ENCODE measurements at regions of chr12 and their contacts with region 1.

Region 1: GRCh38 chr12:108803428-108804105 is 53.8 kb downstream of the SSH1 start:
- DNase-seq: peak in 1 of 2 experiments; percentile 76
- H3K4me3 ChIP-seq: peak overlapping the region in 1 of 4 experiments; percentile 43; a peak in 1 of 8 replicates
- H3K27ac ChIP-seq: no peak overlapping the region
- H3K4me1 ChIP-seq: peaks cover 2 to 13% (median 8%) of the 10 kb centered on the region in 4 experiments; a peak in 5 of 7 replicates
- H3K27me3 ChIP-seq: no peaks in the 10 kb centered on the region
- CTCF ChIP-seq: peak; percentile 75 to 95 (median 80)
- EP300 ChIP-seq: no peak
- POLR2A ChIP-seq: no peak
- RAD21 ChIP-seq: peak; percentile 96

Region 2: DNA sequence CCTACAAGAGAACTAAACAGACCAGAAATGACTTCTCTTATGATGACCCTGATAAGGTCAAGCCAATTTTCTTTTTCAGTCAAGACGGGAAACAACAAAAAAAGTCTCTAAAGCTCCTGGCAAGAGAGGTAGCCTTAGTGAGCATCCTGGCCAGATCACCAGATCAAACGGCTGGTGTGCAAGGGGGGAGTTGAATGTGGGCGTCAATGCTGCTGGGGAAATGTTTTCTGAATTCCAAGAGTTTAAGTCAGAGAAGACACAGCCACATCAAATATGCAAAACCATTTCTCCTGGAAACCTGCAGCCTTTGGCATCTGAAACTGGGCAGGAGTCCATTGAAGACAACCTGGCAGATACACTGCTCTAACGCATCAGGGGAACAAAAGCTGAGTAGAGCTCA is 153.9 kb before region 1 on chr12:
- CTCF ChIA-PET with region 1: interaction called, 13 read pairs
- POLR2A ChIA-PET with region 1: interaction called, 4 read pairs
- DNase-seq: no peak
- H3K4me3 ChIP-seq: no peak overlapping the region
- H3K27ac ChIP-seq: no peak overlapping the region
- H3K4me1 ChIP-seq: peaks cover 3 to 14% (median 8%) of the 10 kb centered on the region in 4 experiments; a peak in 6 of 7 replicates
- H3K27me3 ChIP-seq: no peaks in the 10 kb centered on the region
- CTCF ChIP-seq: no peak
- EP300 ChIP-seq: no peak
- POLR2A ChIP-seq: no peak
- RAD21 ChIP-seq: no peak

Region 3: DNA sequence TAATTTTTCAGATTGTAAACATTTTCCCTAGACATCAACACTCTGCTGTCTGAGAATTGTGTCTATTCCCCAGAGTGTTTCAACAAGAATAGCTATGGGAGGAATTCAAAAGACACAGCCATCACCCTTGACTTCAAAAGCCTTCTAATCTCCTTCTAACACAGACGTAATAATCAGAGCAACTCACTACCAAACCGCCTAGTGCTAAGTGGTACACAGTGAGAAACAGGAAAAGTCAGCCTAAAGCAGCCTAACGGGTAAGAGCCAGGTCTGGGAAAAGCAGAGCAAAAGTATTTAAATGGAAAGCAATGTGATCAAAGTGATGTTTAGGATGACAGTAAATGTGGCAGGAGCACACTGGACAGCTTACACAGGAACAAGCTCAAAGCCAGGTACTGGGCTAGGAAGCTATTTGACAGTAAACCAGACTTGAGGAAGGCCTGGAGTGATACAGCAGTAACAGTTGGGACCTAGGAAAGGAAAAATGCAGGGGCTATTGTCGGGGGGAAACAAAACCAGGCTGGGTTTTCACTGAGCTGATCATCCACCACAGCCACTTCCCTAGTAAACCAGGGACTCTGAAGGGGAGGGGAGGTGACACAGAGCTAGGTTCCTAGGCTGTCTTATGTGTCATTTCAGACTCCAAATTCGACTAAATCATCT is 101.7 kb before region 1 on chr12:
- CTCF ChIA-PET with region 1: interaction called, 10 read pairs
- POLR2A ChIA-PET with region 1: no interaction called
- DNase-seq: no peak
- H3K4me3 ChIP-seq: no peak overlapping the region
- H3K27ac ChIP-seq: peak overlapping the region; percentile 22; the same call in 1 of the 2 replicates
- H3K4me1 ChIP-seq: peaks cover 6 to 16% (median 10%) of the 10 kb centered on the region in 4 experiments; a peak in 6 of 7 replicates
- H3K27me3 ChIP-seq: no peaks in the 10 kb centered on the region
- CTCF ChIP-seq: no peak
- EP300 ChIP-seq: no peak
- POLR2A ChIP-seq: no peak
- RAD21 ChIP-seq: no peak

Region 4: GRCh38 chr12:108784270-108784669 is 19.3 kb before region 1 on chr12:
- CTCF ChIA-PET with region 1: interaction called, 13 read pairs
- POLR2A ChIA-PET with region 1: no interaction called
- DNase-seq: no peak
- H3K4me3 ChIP-seq: no peak overlapping the region
- H3K27ac ChIP-seq: no peak overlapping the region
- H3K4me1 ChIP-seq: peaks cover 5 to 16% (median 8%) of the 10 kb centered on the region in 4 experiments; a peak in 6 of 7 replicates
- H3K27me3 ChIP-seq: no peaks in the 10 kb centered on the region
- CTCF ChIP-seq: no peak
- EP300 ChIP-seq: no peak
- POLR2A ChIP-seq: no peak
- RAD21 ChIP-seq: no peak

Region 5: GRCh38 chr12:108826101-108826806 is 22.7 kb after region 1 on chr12:
- CTCF ChIA-PET with region 1: interaction called, 19 read pairs
- POLR2A ChIA-PET with region 1: interaction called, 4 read pairs
- DNase-seq: no peak
- H3K4me3 ChIP-seq: no peak overlapping the region
- H3K27ac ChIP-seq: peak overlapping the region; percentile 27; the same call in 1 of the 2 replicates
- H3K4me1 ChIP-seq: peaks cover 0 to 7% (median 5%) of the 10 kb centered on the region in 4 experiments; a peak in 4 of 7 replicates
- H3K27me3 ChIP-seq: no peaks in the 10 kb centered on the region
- CTCF ChIP-seq: no peak
- EP300 ChIP-seq: no peak
- POLR2A ChIP-seq: no peak
- RAD21 ChIP-seq: no peak

Measured in H1 (cell line).